GM12878 (cell line): ENCODE measurements at regions of chr1 and their contacts with region 1.

Region 1: GRCh38 chr1:212814537-212815334 is 23.0 kb downstream of the TATDN3 start:
- DNase-seq: no peak
- ATAC-seq: no peak
- H3K4me3 ChIP-seq: no peak overlapping the region
- H3K27ac ChIP-seq: no peak overlapping the region
- H3K4me1 ChIP-seq: no peaks in the 10 kb centered on the region; the same call in 1 of the 2 replicates
- H3K27me3 ChIP-seq: no peaks in the 10 kb centered on the region
- CTCF ChIP-seq: peak; percentile 30 to 44 (median 36); a peak in 4 of 6 replicates
- EP300 ChIP-seq: no peak
- POLR2A ChIP-seq: no peak
- RAD21 ChIP-seq: peak; percentile 60

Region 2: GRCh38 chr1:212727386-212728181 is 87.2 kb before region 1 on chr1:
- CTCF ChIA-PET with region 1: no interaction called
- POLR2A ChIA-PET with region 1: no interaction called
- RAD21 ChIA-PET with region 1: no interaction called
- SMC1A ChIA-PET with region 1: no interaction called
- in situ Hi-C with region 1: no loop called
- intact Hi-C with region 1: no loop called
- DNase-seq: no peak
- ATAC-seq: no peak
- H3K4me3 ChIP-seq: no peak overlapping the region
- H3K27ac ChIP-seq: no peak overlapping the region
- H3K4me1 ChIP-seq: peaks cover 9% of the 10 kb centered on the region
- H3K27me3 ChIP-seq: no peaks in the 10 kb centered on the region
- CTCF ChIP-seq: no peak
- EP300 ChIP-seq: no peak
- POLR2A ChIP-seq: no peak
- RAD21 ChIP-seq: no peak

Region 3: DNA sequence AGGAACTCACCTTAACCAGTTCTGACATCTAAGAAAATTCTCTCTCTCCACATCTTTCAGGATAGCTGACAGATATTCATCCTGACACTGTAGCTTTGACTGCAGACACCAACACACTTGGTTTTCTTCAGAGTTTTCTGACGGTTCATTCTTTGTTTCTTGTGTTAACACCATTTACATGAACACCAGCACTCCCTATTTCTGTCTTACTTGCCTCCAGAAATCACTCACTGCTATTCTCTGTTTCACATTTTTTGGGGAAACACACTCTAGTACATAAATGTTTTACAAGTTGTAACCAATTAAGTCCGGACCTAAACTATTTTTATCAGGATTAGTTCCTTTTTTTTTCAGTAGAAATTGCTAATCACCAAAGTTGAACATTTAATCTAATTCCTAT is 58.8 kb after region 1 on chr1:
- CTCF ChIA-PET with region 1: interaction called, 6 read pairs
- POLR2A ChIA-PET with region 1: no interaction called
- RAD21 ChIA-PET with region 1: interaction called, 4 read pairs
- SMC1A ChIA-PET with region 1: interaction called, 12 read pairs
- in situ Hi-C with region 1: no loop called
- intact Hi-C with region 1: no loop called
- DNase-seq: peak; percentile 77
- ATAC-seq: peak; percentile 82
- H3K4me3 ChIP-seq: peak overlapping the region; percentile 8; the same call in 1 of the 2 replicates
- H3K27ac ChIP-seq: peak overlapping the region; percentile 46
- H3K4me1 ChIP-seq: peaks cover 11% of the 10 kb centered on the region
- H3K27me3 ChIP-seq: no peaks in the 10 kb centered on the region
- CTCF ChIP-seq: no peak
- EP300 ChIP-seq: peak; percentile 57 to 77; a peak in 3 of 4 replicates
- POLR2A ChIP-seq: no peak
- RAD21 ChIP-seq: no peak

Region 4: GRCh38 chr1:212959266-212960220 is 144.8 kb after region 1 on chr1:
- CTCF ChIA-PET with region 1: interaction called, 10 read pairs
- POLR2A ChIA-PET with region 1: no interaction called
- RAD21 ChIA-PET with region 1: interaction called, 11 read pairs
- SMC1A ChIA-PET with region 1: interaction called, 7 read pairs
- in situ Hi-C with region 1: no loop called
- intact Hi-C with region 1: no loop called
- DNase-seq: peak; percentile 79
- ATAC-seq: peak; percentile 77
- H3K4me3 ChIP-seq: peak overlapping the region; percentile 37; the same call in 1 of the 2 replicates
- H3K27ac ChIP-seq: peak overlapping the region; percentile 91
- H3K4me1 ChIP-seq: peaks cover 75% of the 10 kb centered on the region
- H3K27me3 ChIP-seq: no peaks in the 10 kb centered on the region
- CTCF ChIP-seq: no peak
- EP300 ChIP-seq: no peak
- POLR2A ChIP-seq: no peak
- RAD21 ChIP-seq: no peak

Region 5: DNA sequence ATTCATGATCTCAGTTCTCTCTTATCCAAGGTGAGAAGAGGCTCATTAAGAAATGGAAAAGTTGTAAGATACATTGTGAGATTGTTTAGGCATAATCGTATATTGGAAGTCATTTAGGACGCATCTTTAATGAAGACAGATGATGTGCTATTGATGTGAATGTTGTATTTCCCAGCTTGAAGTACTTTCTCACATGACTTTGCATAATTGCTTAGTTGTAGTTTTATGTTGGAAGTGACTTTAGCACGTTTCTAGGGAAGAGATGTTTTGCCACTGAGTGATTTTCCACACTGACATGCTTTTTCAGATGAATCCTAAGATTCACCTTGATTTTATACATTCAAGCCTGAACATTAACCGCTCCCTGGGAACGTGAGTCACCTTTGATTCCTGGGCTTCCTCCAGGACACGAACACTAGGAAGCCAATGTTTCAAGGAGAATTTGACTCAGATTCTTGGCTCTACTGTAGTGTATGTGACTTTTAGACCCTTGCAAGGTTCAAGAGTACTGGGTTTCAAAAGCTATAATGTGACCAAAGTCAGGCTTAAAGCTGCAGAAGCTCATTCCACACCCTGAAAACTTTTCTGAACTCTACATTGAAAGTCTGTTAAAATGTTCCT is 173.1 kb after region 1 on chr1:
- CTCF ChIA-PET with region 1: interaction called, 19 read pairs
- POLR2A ChIA-PET with region 1: interaction called, 6 read pairs
- RAD21 ChIA-PET with region 1: interaction called, 6 read pairs
- SMC1A ChIA-PET with region 1: interaction called, 8 read pairs
- in situ Hi-C with region 1: no loop called
- intact Hi-C with region 1: no loop called
- DNase-seq: no peak
- ATAC-seq: no peak
- H3K4me3 ChIP-seq: no peak overlapping the region
- H3K27ac ChIP-seq: peak overlapping the region; percentile 14; the same call in 1 of the 2 replicates
- H3K4me1 ChIP-seq: peaks cover 4% of the 10 kb centered on the region; the same call in 1 of the 2 replicates
- H3K27me3 ChIP-seq: no peaks in the 10 kb centered on the region
- CTCF ChIP-seq: no peak
- EP300 ChIP-seq: no peak
- POLR2A ChIP-seq: no peak
- RAD21 ChIP-seq: no peak

Region 6: DNA sequence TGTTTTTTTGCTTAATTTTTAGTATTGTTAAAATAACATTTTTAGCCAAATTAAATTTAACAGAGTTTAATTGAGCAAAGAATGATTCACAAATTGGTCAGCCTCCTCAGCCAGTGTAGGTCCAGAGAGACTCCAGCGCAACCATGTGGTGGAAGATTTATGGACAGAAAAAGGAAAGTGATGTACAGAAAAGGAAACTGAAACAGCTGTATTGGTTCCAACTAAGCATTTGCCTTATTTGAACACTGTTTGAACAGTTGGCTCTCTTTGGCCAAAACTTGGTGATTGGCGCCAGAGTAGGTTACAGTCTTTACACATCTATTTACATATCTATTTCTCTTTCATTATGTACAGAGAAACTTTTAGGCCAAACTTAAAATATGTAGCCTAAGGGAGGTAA is 255.7 kb after region 1 on chr1:
- CTCF ChIA-PET with region 1: interaction called, 17 read pairs
- POLR2A ChIA-PET with region 1: interaction called, 5 read pairs
- RAD21 ChIA-PET with region 1: interaction called, 6 read pairs
- SMC1A ChIA-PET with region 1: interaction called, 7 read pairs
- in situ Hi-C with region 1: no loop called
- intact Hi-C with region 1: no loop called
- DNase-seq: peak; percentile 84
- ATAC-seq: peak; percentile 92
- H3K4me3 ChIP-seq: 0 out of 2 replicates have a peak overlapping the region, but pooled peaks have one; percentile 6
- H3K27ac ChIP-seq: peak overlapping the region; percentile 73
- H3K4me1 ChIP-seq: peaks cover 10% of the 10 kb centered on the region
- H3K27me3 ChIP-seq: no peaks in the 10 kb centered on the region
- CTCF ChIP-seq: peak; percentile 33 to 47 (median 34); a peak in 4 of 6 replicates
- EP300 ChIP-seq: no peak
- POLR2A ChIP-seq: no peak
- RAD21 ChIP-seq: peak; percentile 72

Region 7: GRCh38 chr1:213176341-213176740 is 361.6 kb after region 1 on chr1:
- CTCF ChIA-PET with region 1: no interaction called
- POLR2A ChIA-PET with region 1: no interaction called
- RAD21 ChIA-PET with region 1: no interaction called
- SMC1A ChIA-PET with region 1: no interaction called
- in situ Hi-C with region 1: no loop called
- intact Hi-C with region 1: no loop called
- DNase-seq: no peak
- ATAC-seq: no peak
- H3K4me3 ChIP-seq: no peak overlapping the region
- H3K27ac ChIP-seq: no peak overlapping the region
- H3K4me1 ChIP-seq: no peaks in the 10 kb centered on the region
- H3K27me3 ChIP-seq: no peaks in the 10 kb centered on the region
- CTCF ChIP-seq: no peak
- EP300 ChIP-seq: no peak
- POLR2A ChIP-seq: no peak
- RAD21 ChIP-seq: no peak